ENCODE measurements at regions of chr14 and their contacts with region 1.

Region 1: GRCh38 chr14:26984311-26985177 is 386.7 kb upstream of the NOVA1 start:
- DNase-seq: peak; percentile 34
- H3K4me3 ChIP-seq: no peak overlapping the region
- H3K27ac ChIP-seq: no peak overlapping the region
- H3K4me1 ChIP-seq: no peaks in the 10 kb centered on the region
- CTCF ChIP-seq: peak; percentile 85

Region 2: DNA sequence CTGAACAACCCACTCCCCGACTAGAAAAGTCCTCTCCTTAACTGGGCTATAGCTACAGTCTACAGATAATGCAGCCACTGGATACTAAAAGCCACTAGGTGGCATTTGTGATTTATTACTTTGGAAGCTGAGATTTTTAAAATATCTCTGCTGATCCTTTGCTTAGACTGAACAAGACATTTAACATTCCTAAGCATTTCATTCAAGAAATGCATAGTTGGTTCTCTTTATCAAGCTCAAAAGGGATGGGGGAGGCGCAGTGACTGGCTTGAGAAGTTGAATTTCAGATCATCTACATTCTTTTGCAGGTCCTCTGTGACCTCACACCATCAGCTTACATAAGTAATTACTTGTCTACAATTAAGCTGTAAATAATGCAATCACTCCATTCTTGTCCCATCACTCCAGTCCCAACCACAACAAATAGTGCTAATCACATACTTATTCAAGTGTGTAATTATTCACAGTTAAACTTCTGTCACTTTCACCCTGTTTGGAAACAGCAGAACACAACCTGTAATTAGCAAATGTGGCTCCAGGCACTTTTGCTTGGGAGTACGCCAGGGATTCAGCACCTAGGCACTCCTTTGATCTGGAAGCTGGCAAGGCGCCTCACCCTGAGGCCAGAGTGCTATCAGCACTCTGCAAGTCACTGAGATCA is 590.3 kb before region 1 on chr14:
- CTCF ChIA-PET with region 1: no interaction called
- POLR2A ChIA-PET with region 1: no interaction called
- intact Hi-C with region 1: loop called (anchors 10 kb)
- DNase-seq: no peak
- H3K4me3 ChIP-seq: no peak overlapping the region
- H3K27ac ChIP-seq: no peak overlapping the region
- H3K4me1 ChIP-seq: no peaks in the 10 kb centered on the region
- CTCF ChIP-seq: no peak